ENCODE measurements at regions of chr15 and their contacts with region 1.

Region 1: DNA sequence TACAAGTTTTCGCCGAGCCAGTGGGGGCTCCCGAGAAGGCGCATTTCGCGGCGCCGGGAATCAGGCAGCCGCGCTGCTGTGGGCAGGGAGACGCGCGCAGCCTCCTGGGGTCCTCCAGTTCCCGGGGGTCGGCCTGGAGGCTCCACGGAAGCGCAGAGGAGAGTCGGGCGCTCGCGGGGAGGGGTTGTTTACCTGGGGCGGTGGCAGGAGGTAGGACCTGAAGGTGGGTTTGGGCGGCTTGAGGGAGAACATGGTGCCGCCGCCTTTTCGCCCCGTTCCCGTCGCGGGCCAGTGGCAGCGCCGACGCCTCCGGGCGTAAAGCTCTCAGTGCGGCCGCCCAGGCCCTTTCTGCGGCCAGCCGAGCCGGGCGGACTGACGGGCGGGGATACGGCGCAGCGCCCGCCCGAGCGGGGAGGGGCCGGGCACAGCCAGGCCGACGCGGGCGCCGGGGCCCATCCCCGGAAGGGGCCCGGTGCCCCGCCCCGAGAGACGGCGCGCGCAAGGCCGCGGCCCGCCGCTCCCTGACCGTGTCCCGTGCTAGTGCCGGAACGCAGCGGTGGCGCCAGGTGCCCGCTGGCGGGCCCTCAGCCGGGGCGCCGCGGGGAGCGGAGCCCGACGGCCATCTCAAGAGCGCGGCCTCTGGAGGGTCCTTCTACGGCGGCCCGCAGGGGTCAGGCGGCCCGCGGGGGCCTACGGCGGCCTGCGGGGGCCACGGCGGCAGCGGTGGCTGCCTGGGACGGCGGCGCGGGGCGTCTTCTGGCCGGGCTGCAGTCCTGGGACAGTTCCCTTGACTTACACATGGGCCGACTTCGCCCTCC is at the start of gene MTMR10:
- DNase-seq: peak; percentile 61 to 88 (median 84)
- ATAC-seq: peak; percentile 70 to 98 (median 96)
- H3K4me3 ChIP-seq: peak within 1 kb of the TSS; percentile 82 to 99 (median 94)
- H3K27ac ChIP-seq: peak within 1 kb of the TSS; percentile 89 to 99 (median 96)
- H3K4me1 ChIP-seq: peaks cover 0 to 48% (median 40%) of the 10 kb centered on the region in 12 donors
- H3K27me3 ChIP-seq: no peaks in the 10 kb centered on the region
- CTCF ChIP-seq: no peak
- POLR2A ChIP-seq: peak in 1 of 2 donors; percentile 82
- total RNA-seq, gene MTMR10: 14.4 to 38.9 (median 27.8) TPM

Region 2: DNA sequence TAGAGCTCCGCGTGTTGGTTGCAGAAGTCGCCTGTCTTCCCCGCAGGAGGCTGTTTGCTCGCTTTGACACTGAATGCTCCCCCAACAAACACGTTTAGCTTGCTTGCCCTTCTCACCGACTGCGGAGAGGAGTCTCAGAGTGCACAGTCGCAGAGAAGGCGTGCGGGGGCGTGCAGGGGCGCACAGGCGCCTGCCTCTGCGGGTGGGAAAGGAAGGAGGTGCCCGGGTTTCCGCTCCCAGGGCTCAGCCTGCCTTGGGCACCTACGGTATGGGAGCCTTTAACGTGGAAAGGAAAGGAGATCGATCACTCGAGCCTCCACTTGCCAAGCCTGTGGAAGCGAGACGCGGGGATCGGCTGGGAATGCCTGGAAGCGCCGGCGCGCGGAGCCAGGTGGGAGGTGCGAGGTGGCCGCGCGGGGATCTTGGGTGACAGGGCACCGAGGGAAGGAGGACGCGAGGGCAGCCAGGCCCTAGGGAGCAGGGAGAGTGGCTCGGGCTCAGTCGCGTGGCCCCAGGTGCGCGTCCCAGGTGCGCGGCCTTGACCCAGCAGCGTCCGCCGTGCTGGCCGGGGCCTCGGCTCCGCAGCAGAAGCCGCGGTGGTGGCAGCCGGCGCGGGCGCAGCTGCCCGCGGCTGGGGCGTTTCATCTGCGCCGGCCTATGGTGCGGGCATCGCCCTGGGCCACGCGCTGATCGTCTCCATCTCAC is 87.8 kb before region 1 on chr15 and contains the start of gene FAN1:
- intact Hi-C with region 1: loop called in 1 of 10 experiments (anchors 5 kb)
- DNase-seq: peak; percentile 83 to 92 (median 89)
- ATAC-seq: peak; percentile 97 to 100 (median 99)
- H3K4me3 ChIP-seq: peak within 1 kb of the TSS; percentile 57 to 94 (median 70)
- H3K27ac ChIP-seq: peak within 1 kb of the TSS; percentile 4 to 89 (median 78)
- H3K4me1 ChIP-seq: peaks cover 0 to 33% (median 14%) of the 10 kb centered on the region in 12 donors
- H3K27me3 ChIP-seq: no peaks in the 10 kb centered on the region
- CTCF ChIP-seq: peak in 2 of 12 donors; percentile 7 to 15
- POLR2A ChIP-seq: peak in 1 of 2 donors; percentile 55
- total RNA-seq, gene FAN1: 7.3 to 21.4 (median 17.5) TPM

Region 3: DNA sequence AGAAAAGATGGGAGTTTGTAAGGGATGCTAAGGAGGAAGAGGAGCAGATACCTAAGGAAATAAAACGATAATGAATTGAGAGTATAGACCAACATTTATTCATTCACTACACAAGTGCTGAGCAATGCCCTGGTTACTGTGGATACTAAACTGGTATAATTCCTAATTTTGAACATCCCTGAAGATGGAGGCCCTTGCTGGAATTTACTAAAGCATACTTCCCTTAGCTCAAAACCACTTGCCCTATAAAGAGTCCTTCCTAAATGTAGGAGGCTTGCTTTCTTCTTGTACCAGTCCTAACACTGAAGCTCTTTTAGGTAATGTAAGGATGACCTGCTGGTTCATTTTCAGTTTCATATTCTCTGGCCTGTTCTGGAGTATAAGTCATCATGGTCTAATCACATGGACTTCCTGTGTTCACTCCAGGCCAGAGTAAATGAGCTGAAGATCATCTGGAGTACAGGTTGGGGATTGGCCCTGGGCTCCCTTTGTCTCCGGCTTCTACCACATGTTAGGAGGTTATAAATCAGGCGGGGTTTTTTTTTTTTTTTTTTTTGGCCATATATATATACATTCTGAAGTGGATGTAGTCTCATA is 40.1 kb after region 1 on chr15:
- intact Hi-C with region 1: loop called in 2 of 10 experiments (anchors 5 kb)
- DNase-seq: no peak
- ATAC-seq: peak in 2 of 4 donors; percentile 38 to 90
- H3K4me3 ChIP-seq: no peak overlapping the region
- H3K27ac ChIP-seq: peak overlapping the region in 4 of 12 donors; percentile 24 to 60 (median 38)
- H3K4me1 ChIP-seq: peaks cover 0 to 26% (median 4%) of the 10 kb centered on the region in 12 donors
- H3K27me3 ChIP-seq: no peaks in the 10 kb centered on the region
- CTCF ChIP-seq: no peak
- POLR2A ChIP-seq: no peak

Region 4: GRCh38 chr15:31062310-31062847 is 70.9 kb after region 1 on chr15:
- intact Hi-C with region 1: loop called in 2 of 10 experiments (anchors 5 kb)
- DNase-seq: no peak
- ATAC-seq: peak in 2 of 4 donors; percentile 21 to 66
- H3K4me3 ChIP-seq: no peak overlapping the region
- H3K27ac ChIP-seq: peak overlapping the region; percentile 9 to 78 (median 60)
- H3K4me1 ChIP-seq: peaks cover 0 to 8% (median 1%) of the 10 kb centered on the region in 12 donors
- H3K27me3 ChIP-seq: no peaks in the 10 kb centered on the region
- CTCF ChIP-seq: no peak
- POLR2A ChIP-seq: no peak

Region 5: DNA sequence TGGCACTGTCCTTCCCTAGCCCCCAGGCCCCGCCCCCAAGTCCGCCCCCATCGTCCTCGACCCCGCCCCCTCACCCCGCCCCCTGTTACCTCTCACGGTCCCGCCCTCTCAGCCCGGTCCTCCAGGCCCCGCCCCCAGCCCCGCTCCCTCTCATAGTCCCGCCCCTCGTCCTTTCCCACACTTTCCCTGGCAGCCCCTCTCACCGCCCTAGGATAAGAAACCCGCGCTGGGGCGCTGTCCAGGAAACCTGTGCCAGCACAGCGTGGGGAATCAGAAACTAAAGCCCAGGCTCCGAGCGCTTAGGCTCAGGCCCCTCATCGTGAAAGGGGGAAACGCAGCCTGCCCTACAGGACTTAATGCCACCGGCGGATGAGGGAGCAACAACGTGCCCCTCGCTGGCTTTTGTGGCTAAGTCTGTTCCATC is 89.1 kb after region 1 on chr15:
- intact Hi-C with region 1: loop called in 2 of 10 experiments (anchors 5 kb)
- DNase-seq: peak; percentile 27 to 84 (median 39)
- ATAC-seq: peak in 3 of 4 donors; percentile 67 to 81 (median 75)
- H3K4me3 ChIP-seq: peak overlapping the region in 8 of 12 donors; percentile 23 to 48 (median 33)
- H3K27ac ChIP-seq: no peak overlapping the region
- H3K4me1 ChIP-seq: peaks cover 0 to 16% (median 0%) of the 10 kb centered on the region in 12 donors
- H3K27me3 ChIP-seq: peaks cover 0 to 7% (median 0%) of the 10 kb centered on the region in 9 donors
- CTCF ChIP-seq: no peak
- POLR2A ChIP-seq: no peak

Region 6: GRCh38 chr15:31391687-31392671 is 400.5 kb after region 1 on chr15:
- intact Hi-C with region 1: loop called in 1 of 10 experiments (anchors 10 kb)
- DNase-seq: peak; percentile 81 to 93 (median 90)
- ATAC-seq: peak; percentile 48 to 85 (median 80)
- H3K4me3 ChIP-seq: peak overlapping the region; percentile 57 to 88 (median 75)
- H3K27ac ChIP-seq: peak overlapping the region; percentile 92 to 99 (median 96)
- H3K4me1 ChIP-seq: peaks cover 0 to 33% (median 20%) of the 10 kb centered on the region in 12 donors
- H3K27me3 ChIP-seq: no peaks in the 10 kb centered on the region
- CTCF ChIP-seq: peak in 2 of 12 donors; percentile 9 to 13
- POLR2A ChIP-seq: peak; percentile 32 to 91